K562 (cell line): ENCODE measurements at regions of chr5 and their contacts with region 1.

Region 1: GRCh38 chr5:149765932-149766331 is 35.8 kb downstream of the PPARGC1B start:
- DNase-seq: peak; percentile 49 to 73 (median 62)
- ATAC-seq: no peak
- H3K4me3 ChIP-seq: no peak overlapping the region
- H3K27ac ChIP-seq: no peak overlapping the region
- H3K4me1 ChIP-seq: peaks cover 3 to 4% of the 10 kb centered on the region in 2 experiments; a peak in 2 of 5 replicates
- H3K27me3 ChIP-seq: no peaks in the 10 kb centered on the region
- CTCF ChIP-seq: peak; percentile 52 to 61 (median 59); a peak in 5 of 6 replicates
- EP300 ChIP-seq: no peak
- POLR2A ChIP-seq: no peak
- RAD21 ChIP-seq: peak; percentile 23 to 57; a peak in 3 of 4 replicates

Region 2: DNA sequence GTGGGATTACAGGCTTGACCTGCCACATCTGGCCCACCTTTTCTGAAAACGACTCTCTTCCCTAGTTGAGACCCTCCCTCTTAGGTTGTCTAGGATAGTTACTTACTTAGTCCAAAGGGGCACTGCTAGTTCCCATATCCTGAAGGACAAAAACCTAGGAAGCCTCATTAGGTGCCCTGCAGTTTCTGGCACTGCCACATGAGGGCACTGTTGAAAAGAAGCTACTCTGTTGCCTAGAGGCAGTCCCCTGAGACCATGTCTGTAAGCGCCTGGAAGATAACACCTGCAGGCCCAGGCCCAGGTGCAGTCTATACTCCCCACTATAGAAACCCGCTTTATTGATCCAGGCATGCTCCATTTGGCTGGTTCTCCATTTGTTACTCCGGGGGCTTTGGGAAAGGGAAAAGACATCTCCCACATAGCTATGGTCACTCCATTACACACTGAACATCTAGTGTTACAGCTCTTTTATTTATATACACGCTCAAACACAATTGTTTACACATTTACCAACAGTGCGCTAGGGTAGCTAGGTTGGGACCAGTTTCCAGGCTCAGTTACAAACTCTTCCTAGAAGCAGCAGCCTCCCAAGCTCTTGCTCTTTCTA is 109.3 kb before region 1 on chr5:
- CTCF ChIA-PET with region 1: no interaction called
- POLR2A ChIA-PET with region 1: interaction called, 3 read pairs
- in situ Hi-C with region 1: no loop called
- intact Hi-C with region 1: loop called (anchors 2 kb)
- DNase-seq: peak; percentile 58 to 70 (median 62)
- ATAC-seq: peak; percentile 80
- H3K4me3 ChIP-seq: no peak overlapping the region
- H3K27ac ChIP-seq: no peak overlapping the region
- H3K4me1 ChIP-seq: peaks cover 0 to 9% of the 10 kb centered on the region in 2 experiments; a peak in 2 of 5 replicates
- H3K27me3 ChIP-seq: no peaks in the 10 kb centered on the region; a peak in 1 of 5 replicates
- CTCF ChIP-seq: peak; percentile 81 to 91 (median 91)
- EP300 ChIP-seq: no peak
- POLR2A ChIP-seq: no peak
- RAD21 ChIP-seq: peak; percentile 77 to 88

Region 3: GRCh38 chr5:150009671-150010387 is 243.9 kb after region 1 on chr5:
- CTCF ChIA-PET with region 1: no interaction called
- POLR2A ChIA-PET with region 1: no interaction called
- in situ Hi-C with region 1: no loop called
- intact Hi-C with region 1: no loop called
- DNase-seq: peak in 2 of 4 experiments; percentile 27 to 36
- ATAC-seq: peak; percentile 53; the same call in 2 of the 3 replicates
- H3K4me3 ChIP-seq: no peak overlapping the region
- H3K27ac ChIP-seq: no peak overlapping the region; the same call in 2 of the 3 replicates
- H3K4me1 ChIP-seq: peaks cover 0 to 8% of the 10 kb centered on the region in 2 experiments; a peak in 2 of 5 replicates
- H3K27me3 ChIP-seq: no peaks in the 10 kb centered on the region
- CTCF ChIP-seq: no peak
- EP300 ChIP-seq: no peak
- POLR2A ChIP-seq: no peak
- RAD21 ChIP-seq: no peak